ENCODE measurements at regions of chr4 and their contacts with region 1.

Region 1: GRCh38 chr4:109815151-109816081 is at the start of gene GAR1:
- DNase-seq: peak; percentile 92
- H3K4me3 ChIP-seq: peak within 1 kb of the TSS; percentile 65 to 70
- H3K27ac ChIP-seq: peak within 1 kb of the TSS; percentile 86 to 90
- H3K4me1 ChIP-seq: peaks cover 7% of the 10 kb centered on the region
- H3K27me3 ChIP-seq: no peaks in the 10 kb centered on the region
- CTCF ChIP-seq: peak in 1 of 4 experiments; percentile 18
- POLR2A ChIP-seq: peak; percentile 71
- total RNA-seq, gene GAR1: 3.2 to 7.5 TPM

Region 2: GRCh38 chr4:109433205-109434006 is 382.0 kb before region 1 on chr4 and contains the start of gene SEC24B:
- intact Hi-C with region 1: loop called (anchors 5 kb)
- DNase-seq: peak; percentile 90
- H3K4me3 ChIP-seq: peak within 1 kb of the TSS; percentile 79 to 87
- H3K27ac ChIP-seq: peak within 1 kb of the TSS; percentile 93 to 96
- H3K4me1 ChIP-seq: peaks cover 10% of the 10 kb centered on the region
- H3K27me3 ChIP-seq: no peaks in the 10 kb centered on the region
- CTCF ChIP-seq: peak; percentile 77 to 97 (median 94)
- POLR2A ChIP-seq: peak; percentile 84
- total RNA-seq, gene SEC24B: 27.6 to 44.1 TPM

Region 3: DNA sequence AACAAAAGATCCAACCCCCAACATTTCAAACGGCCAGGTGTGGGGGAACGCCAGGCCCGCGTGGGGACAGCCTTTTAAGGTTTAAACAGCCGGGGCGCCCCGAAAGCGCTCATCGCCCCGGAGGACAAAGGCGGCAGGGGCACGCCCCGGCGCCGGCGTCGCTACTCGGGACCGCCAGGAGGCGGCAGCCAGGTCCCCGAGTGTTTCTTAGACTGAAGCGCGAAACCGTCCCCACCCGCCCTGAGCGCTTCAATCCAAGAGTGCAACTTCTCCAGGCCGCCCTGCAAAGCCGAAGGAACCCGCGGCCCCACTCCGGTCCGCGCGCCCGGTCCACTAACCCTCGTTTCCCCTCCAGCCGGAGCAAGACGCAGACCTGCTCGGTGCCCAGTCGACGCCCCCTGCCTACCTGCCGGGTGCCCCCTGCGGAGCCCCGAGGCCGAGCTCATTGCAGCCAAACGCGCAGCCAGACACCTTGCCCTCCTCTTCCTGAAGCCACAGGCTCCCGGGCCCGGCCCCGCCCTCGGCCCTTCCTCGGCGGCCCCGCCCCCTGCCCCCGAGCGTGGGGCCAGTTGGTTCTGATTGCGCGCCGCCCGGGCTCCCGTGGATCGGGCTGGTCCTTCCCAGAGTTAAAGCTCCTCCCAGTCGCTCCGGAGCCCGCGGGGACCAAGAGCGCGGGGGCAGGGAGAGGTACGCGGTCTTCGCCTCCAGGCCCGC is 112.3 kb before region 1 on chr4 and contains the start of gene CASP6:
- intact Hi-C with region 1: loop called (anchors 5 kb)
- DNase-seq: peak; percentile 84
- H3K4me3 ChIP-seq: peak within 1 kb of the TSS; percentile 59 to 61
- H3K27ac ChIP-seq: peak within 1 kb of the TSS; percentile 81 to 88
- H3K4me1 ChIP-seq: no peaks in the 10 kb centered on the region
- H3K27me3 ChIP-seq: no peaks in the 10 kb centered on the region
- CTCF ChIP-seq: peak; percentile 28 to 75 (median 54)
- POLR2A ChIP-seq: peak; percentile 63
- total RNA-seq, gene CASP6: 17.6 to 37.0 TPM

Region 4: DNA sequence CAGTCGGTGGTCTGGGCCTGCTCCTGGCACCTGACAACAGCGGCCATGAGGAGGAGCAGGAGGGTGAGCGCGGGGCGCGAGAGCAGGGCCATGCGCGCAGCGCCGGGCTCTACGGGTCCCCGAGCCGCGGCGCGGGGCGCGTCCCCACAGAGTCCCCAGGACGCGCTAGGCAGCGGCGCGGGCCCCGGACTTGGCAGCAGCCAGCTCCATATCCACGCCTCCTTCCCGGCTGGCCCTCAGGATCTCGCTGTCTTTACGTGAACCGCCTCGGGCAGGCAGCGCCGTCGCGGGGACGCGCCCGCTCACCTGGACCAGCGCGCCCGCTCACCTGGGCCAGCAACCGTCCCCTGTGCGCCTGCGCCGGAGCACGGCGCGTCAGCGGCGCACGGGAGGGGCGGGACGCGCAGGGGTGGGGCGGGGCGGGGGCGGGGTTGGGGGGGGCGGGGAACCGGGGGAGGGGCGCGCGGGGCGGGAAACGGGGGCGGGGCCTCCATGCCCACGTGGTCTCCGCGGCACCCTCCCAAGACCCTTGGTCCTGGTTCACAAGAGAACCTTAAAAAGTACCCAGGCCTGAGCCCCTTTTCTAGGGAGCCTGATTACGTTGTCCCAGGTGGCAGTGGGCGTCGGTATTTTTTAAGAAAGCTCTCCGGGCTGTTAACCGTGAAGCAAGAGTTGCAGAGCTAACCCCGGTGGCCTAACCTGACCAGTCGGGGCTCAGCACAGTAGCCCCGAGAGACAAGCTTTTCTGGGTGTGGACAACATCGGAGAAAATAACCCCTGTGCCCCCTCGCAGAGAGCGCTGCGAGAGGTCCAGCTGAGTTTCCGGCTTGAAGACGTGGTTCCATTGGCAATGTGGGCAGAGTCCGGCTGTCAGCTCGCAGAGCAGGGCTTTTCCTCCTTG is 85.4 kb before region 1 on chr4 and contains the start of gene PLA2G12A:
- intact Hi-C with region 1: loop called (anchors 5 kb)
- DNase-seq: peak; percentile 91
- H3K4me3 ChIP-seq: peak within 1 kb of the TSS; percentile 71 to 75
- H3K27ac ChIP-seq: peak within 1 kb of the TSS; percentile 87
- H3K4me1 ChIP-seq: peaks cover 6% of the 10 kb centered on the region
- H3K27me3 ChIP-seq: no peaks in the 10 kb centered on the region
- CTCF ChIP-seq: no peak
- POLR2A ChIP-seq: peak; percentile 89
- total RNA-seq, gene PLA2G12A: 20.2 to 122 TPM

Region 5: DNA sequence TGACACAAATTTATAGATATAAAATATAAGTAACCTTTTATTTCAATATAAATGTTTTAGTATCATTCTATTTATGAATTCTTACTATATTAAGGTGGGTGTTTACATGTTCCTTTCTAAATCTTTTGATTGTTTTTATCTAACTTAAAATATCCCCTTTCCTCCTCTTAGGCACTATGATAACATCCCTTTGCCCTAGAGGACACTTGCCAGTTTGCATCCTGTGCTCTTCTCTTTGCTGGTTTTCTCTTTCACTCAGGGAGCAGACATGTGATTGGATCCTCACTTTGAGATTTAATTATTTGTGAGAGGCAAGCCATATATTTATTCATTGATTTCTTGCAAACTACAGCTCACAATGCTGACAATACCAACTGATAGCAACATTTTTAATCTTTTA is 48.7 kb after region 1 on chr4:
- intact Hi-C with region 1: no loop called
- DNase-seq: no peak
- H3K4me3 ChIP-seq: no peak overlapping the region
- H3K27ac ChIP-seq: no peak overlapping the region
- H3K4me1 ChIP-seq: no peaks in the 10 kb centered on the region
- H3K27me3 ChIP-seq: no peaks in the 10 kb centered on the region
- CTCF ChIP-seq: no peak
- POLR2A ChIP-seq: no peak

Measured in prostate gland (tissue), 2 donors.